ENCODE measurements at regions of chr1 and their contacts with region 1.

Region 1: DNA sequence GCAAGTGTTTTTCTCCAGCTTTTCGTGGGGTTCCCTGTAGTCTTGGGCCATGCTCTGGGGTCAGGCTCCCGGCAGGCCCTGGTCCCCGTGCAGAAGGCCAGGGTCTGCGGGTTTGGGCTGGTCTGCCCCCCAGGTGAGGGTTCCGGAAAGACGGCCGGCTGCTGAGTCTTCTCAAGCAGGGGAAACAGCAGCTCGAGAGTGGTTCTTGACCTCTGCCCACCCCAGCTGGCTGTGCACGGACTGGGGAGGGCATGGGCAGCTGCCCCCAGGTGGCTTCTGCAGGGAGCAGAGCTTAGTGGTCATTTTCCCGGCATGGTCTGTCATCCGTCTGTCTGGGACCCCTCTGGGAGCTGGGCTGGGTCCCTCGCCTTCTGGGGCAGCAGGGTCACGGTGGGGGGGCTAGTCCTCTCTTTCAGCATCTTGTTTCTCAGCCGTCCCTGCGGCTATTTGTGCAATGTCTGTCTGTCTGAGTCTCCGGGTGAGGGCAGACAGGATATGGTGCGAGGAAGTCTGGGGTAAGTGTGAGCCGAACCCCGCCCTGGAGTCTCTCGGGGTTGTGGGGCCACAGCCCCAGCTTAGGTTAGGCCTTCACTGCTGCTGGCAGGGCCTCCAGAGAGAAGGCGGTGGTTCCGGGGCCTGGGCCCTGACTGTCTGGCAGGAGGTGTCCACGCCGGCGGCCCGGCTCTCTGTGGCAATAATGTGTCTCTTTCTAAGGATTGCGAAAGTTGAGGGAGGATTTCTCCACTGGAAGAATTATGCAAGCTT is 6.1 kb downstream of the SKI start:
- DNase-seq: peak; percentile 67
- H3K4me3 ChIP-seq: peak overlapping the region; percentile 3
- H3K27ac ChIP-seq: peak overlapping the region; percentile 57
- H3K4me1 ChIP-seq: peaks cover 40% of the 10 kb centered on the region
- H3K27me3 ChIP-seq: no peaks in the 10 kb centered on the region
- CTCF ChIP-seq: no peak

Region 2: DNA sequence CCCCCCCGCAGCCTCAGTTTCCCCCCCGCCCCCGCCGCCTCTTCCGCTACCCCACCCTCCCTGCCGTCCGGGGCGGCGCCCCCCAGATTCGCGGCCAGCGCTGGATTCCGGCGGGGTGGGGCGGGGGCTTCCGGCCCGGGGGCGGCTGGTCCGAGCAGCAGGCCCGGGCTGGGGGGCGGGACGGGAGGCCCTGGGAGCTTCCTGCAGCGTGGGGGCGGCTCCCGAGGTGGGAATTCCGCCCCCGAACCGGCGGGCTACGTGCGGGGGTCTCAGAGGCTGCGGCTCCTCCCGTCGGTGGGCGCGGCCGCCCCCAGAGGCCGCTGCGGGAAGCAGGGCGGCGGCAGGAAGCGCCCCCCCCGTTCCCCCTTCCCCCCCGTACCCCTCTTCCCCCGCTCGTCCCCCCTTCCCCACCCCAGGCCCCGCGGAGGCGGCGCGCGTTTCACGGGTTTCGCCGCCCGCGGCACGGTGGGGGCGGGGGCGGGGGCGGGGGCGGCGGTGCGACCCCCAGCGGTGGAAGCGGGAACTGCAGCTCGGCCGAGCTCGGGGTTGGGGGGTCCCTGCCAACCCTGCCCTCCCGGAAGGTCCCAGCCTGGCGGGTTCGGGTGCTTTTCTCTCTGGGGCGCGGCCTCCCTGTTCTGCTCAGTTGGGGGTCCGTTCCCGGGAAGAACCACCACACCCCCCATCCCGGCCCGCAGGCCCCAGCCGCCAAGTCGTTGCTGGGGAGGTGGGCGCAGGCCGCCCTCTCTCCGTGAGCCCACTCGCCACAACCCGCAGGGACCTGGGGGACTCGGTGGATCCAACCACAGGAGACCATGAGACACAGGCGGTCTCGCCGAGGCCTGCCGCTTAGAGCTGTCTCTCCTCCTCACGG is 80.9 kb after region 1 on chr1:
- intact Hi-C with region 1: loop called (anchors 5 kb)
- DNase-seq: peak; percentile 48
- H3K4me3 ChIP-seq: peak overlapping the region; percentile 56
- H3K27ac ChIP-seq: peak overlapping the region; percentile 78
- H3K4me1 ChIP-seq: peaks cover 7% of the 10 kb centered on the region
- H3K27me3 ChIP-seq: peaks cover 4% of the 10 kb centered on the region
- CTCF ChIP-seq: peak; percentile 93

Measured in colonic mucosa (tissue), 4 donors.